Activated naive CD4-positive, alpha-beta T cell treated with anti-CD3 and anti-CD28 coated beads for 36 hours (primary cell): ENCODE measurements at regions of chr7 and their contacts with region 1.

Region 1: GRCh38 chr7:2403014-2403717 is at the start of gene CHST12:
- DNase-seq: peak; percentile 93
- H3K4me3 Mint-ChIP-seq: peak within 1 kb of the TSS; percentile 80
- H3K27ac Mint-ChIP-seq: no peak within 1 kb of the TSS
- H3K4me1 Mint-ChIP-seq: peaks cover 40% of the 10 kb centered on the region
- H3K27me3 Mint-ChIP-seq: no peaks in the 10 kb centered on the region
- total RNA-seq, gene CHST12: 0.62 to 0.64 TPM

Region 2: GRCh38 chr7:1919539-1920265 is 483.5 kb before region 1 on chr7:
- CTCF ChIA-PET with region 1: no interaction called
- intact Hi-C with region 1: loop called (anchors 10 kb)
- DNase-seq: peak; percentile 22
- H3K4me3 Mint-ChIP-seq: peak overlapping the region; percentile 57
- H3K27ac Mint-ChIP-seq: no peak overlapping the region
- H3K4me1 Mint-ChIP-seq: peaks cover 61% of the 10 kb centered on the region
- H3K27me3 Mint-ChIP-seq: peaks cover 5% of the 10 kb centered on the region

Region 3: DNA sequence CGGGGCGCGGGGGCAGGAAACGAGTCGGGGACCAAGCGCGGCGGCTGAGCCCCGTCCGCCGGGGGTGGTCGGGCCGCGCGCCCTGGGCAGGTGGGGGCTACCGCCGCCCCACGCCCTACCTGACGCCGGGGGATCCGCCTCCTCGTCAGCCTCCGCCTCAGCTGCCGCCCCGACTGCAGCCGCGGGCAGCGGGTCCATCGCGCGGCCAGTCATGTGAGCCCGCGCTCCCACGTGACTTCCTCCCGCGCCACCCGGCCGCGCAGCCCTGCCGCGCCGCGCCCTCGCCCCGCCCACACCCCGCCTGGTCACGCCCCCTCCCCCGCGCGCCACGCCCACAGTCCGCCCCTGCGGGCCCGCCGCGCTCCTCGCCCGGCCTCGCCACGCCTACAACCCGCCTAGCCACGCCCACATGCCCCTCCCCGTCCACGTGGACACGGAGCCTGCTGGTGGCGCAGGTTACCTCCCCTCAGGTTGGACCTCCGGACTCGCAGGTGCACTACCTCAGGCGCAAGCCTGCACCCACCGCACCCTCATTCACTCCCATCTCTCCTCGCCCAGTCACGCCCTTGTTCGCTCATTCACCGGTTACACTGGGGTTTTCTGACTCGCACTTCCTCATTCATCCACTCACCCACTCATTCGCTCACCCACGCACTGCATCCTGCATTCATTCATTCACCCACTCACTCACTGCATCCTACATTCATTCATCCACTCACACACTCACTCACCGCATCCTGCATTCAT is 88.8 kb before region 1 on chr7 and contains the start of gene SNX8:
- CTCF ChIA-PET with region 1: no interaction called
- intact Hi-C with region 1: loop called (anchors 5 kb)
- DNase-seq: peak; percentile 95
- H3K4me3 Mint-ChIP-seq: peak within 1 kb of the TSS; percentile 88
- H3K27ac Mint-ChIP-seq: no peak within 1 kb of the TSS
- H3K4me1 Mint-ChIP-seq: peaks cover 13% of the 10 kb centered on the region
- H3K27me3 Mint-ChIP-seq: no peaks in the 10 kb centered on the region
- total RNA-seq, gene SNX8: 28.7 to 29.6 TPM

Region 4: GRCh38 chr7:2523941-2524807 is 121.0 kb after region 1 on chr7:
- CTCF ChIA-PET with region 1: no interaction called
- intact Hi-C with region 1: loop called (anchors 2 kb)
- DNase-seq: no peak
- H3K4me3 Mint-ChIP-seq: no peak overlapping the region
- H3K27ac Mint-ChIP-seq: no peak overlapping the region
- H3K4me1 Mint-ChIP-seq: peaks cover 58% of the 10 kb centered on the region
- H3K27me3 Mint-ChIP-seq: no peaks in the 10 kb centered on the region

Region 5: GRCh38 chr7:3112479-3113134 is 709.4 kb after region 1 on chr7:
- CTCF ChIA-PET with region 1: no interaction called
- intact Hi-C with region 1: loop called (anchors 10 kb)
- DNase-seq: peak; percentile 49
- H3K4me3 Mint-ChIP-seq: no peak overlapping the region
- H3K27ac Mint-ChIP-seq: peak overlapping the region; percentile 39
- H3K4me1 Mint-ChIP-seq: peaks cover 54% of the 10 kb centered on the region
- H3K27me3 Mint-ChIP-seq: no peaks in the 10 kb centered on the region